ENCODE measurements at regions of chr7 and their contacts with region 1.

Region 1: GRCh38 chr7:87886875-87887274 is 10.6 kb downstream of the DBF4 start:
- DNase-seq: peak; percentile 7
- H3K4me3 ChIP-seq: no peak overlapping the region
- H3K27ac ChIP-seq: no peak overlapping the region
- H3K4me1 ChIP-seq: no peaks in the 10 kb centered on the region
- H3K27me3 ChIP-seq: no peaks in the 10 kb centered on the region
- CTCF ChIP-seq: peak; percentile 30 to 41

Region 2: DNA sequence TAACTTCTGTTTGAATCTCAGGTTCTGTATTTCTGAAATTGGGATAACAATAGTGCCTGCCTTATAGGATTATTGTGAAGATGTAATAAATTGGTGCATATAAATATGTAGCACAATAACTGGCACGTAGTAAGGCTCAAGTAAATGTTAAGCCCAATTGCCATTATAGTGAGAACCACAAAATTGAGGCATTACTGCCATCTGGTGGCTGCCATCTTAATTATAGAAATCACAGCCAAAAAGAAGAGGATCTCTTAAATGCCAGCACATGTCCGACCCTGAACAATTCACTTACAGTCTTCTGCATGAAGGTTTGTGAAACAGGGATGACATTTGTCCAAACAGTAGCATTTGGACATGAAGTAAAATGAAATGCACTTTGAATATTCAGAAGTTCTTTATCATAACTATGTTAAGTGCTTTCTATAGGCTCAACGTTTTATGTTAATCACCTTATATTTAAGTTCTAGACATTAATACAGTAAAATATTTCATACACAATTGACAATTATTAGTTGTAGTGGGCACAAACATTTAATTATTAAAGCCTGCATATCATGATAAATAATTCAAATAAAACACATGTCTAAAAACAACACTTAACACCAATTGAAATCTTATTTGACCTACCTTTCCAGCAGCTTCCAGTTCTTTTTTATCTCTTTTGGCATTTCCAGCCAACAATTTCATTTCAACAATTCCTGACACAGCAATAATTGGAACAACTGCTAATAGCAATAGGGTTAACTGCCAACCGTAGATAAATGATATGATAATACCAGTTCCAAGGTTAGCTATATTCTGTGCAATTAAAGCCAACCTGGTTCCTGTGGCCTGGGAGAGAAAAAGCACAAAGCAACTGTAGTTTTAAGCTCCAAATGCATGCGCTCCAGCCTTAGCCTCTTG is 469.9 kb before region 1 on chr7:
- CTCF ChIA-PET with region 1: no interaction called
- dilution Hi-C with region 1: no loop called
- in situ Hi-C with region 1: no loop called
- intact Hi-C with region 1: loop called (anchors 10 kb)
- DNase-seq: peak; percentile 44
- H3K4me3 ChIP-seq: no peak overlapping the region
- H3K27ac ChIP-seq: no peak overlapping the region
- H3K4me1 ChIP-seq: no peaks in the 10 kb centered on the region
- H3K27me3 ChIP-seq: no peaks in the 10 kb centered on the region
- CTCF ChIP-seq: peak; percentile 56

Region 3: DNA sequence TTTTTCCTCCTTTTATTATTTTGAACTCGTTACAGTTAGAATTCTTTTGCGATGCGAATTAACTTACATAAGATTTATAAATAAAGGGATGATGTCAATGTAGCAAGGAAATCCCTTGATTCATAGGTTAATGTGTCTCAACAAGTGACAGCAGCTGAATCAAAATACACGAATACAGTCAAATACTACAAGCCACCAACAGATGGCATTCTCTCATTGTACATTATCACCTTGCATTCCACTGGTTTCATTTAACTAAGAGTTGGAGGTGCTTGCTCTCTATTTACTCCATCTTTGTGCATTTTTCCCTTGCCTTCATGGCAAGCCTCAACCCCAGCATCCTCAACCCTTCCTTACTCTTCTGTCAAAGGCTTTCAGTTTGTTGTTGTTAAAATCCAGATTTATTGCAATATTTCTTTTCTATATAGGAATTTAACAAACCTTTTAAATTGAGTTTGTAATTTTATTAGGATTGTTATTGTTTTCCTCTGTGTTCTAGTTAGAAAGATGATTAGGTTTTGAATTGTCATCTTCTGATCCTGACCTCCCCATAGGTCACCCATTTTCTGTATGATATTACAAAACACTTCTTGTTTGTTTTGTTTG is 89.0 kb before region 1 on chr7:
- CTCF ChIA-PET with region 1: no interaction called
- dilution Hi-C with region 1: no loop called
- in situ Hi-C with region 1: loop called in 1 of 2 experiments (anchors 10 kb)
- intact Hi-C with region 1: loop called (anchors 1 kb)
- DNase-seq: peak; percentile 68
- H3K4me3 ChIP-seq: no peak overlapping the region
- H3K27ac ChIP-seq: no peak overlapping the region
- H3K4me1 ChIP-seq: no peaks in the 10 kb centered on the region
- H3K27me3 ChIP-seq: no peaks in the 10 kb centered on the region
- CTCF ChIP-seq: peak; percentile 62 to 70

Region 4: GRCh38 chr7:87806150-87806549 is 80.7 kb before region 1 on chr7:
- CTCF ChIA-PET with region 1: no interaction called
- dilution Hi-C with region 1: no loop called
- in situ Hi-C with region 1: loop called in 1 of 2 experiments (anchors 10 kb)
- intact Hi-C with region 1: no loop called
- DNase-seq: no peak
- H3K4me3 ChIP-seq: no peak overlapping the region
- H3K27ac ChIP-seq: no peak overlapping the region
- H3K4me1 ChIP-seq: no peaks in the 10 kb centered on the region
- H3K27me3 ChIP-seq: no peaks in the 10 kb centered on the region
- CTCF ChIP-seq: no peak

Region 5: GRCh38 chr7:88111136-88111743 is 224.4 kb after region 1 on chr7:
- CTCF ChIA-PET with region 1: no interaction called
- dilution Hi-C with region 1: no loop called
- in situ Hi-C with region 1: no loop called
- intact Hi-C with region 1: loop called (anchors 2 kb)
- DNase-seq: peak; percentile 23
- H3K4me3 ChIP-seq: no peak overlapping the region
- H3K27ac ChIP-seq: no peak overlapping the region
- H3K4me1 ChIP-seq: no peaks in the 10 kb centered on the region
- H3K27me3 ChIP-seq: no peaks in the 10 kb centered on the region
- CTCF ChIP-seq: peak; percentile 38 to 54

Measured in mammary epithelial cell (primary cell).